Activated B cell treated with CpG ODN at 0.5 μM for 24 hours (primary cell): ENCODE measurements at regions of chr15 and their contacts with region 1.

Region 1: DNA sequence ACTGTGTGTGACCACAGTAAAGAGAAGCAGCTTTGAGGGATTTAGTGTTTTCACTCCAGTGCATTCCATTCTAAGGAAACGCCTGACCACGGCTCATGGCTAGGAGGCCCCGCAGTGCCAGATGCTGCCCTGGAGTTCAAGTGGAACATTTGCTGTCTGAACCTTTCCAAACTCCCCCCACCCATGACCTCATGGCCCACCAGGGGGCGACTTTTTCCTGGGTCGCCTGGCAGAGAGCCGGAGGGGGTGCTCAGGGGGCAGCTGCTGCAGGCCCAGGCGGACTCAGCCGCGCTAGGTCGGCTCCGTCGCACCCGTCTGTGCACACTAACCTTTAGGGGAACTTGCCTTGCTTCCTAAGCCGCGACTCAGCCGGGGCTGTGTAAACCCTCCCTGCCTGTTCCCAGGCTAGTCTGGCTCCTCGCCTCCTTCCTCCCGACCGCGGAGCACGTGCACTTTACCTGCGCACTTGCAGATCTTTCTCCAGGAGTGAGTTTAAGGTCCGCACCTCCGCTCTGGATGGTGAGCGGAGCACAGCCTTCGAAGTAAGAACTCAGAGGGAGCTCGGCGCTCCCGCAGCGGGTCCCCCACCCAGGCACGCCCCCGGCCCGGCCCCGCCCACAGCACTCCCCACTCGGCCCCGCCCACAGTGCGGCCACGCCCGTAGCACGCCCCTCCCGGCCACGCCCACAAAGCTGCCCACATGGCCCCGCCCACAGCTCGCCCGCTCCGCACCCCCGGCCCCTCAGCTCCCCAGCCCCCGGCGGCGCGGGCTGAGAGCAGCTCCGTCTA is at the start of gene OCA2:
- DNase-seq: peak; percentile 47
- ATAC-seq: no peak
- H3K4me3 Mint-ChIP-seq: peak within 1 kb of the TSS; percentile 53
- H3K27ac Mint-ChIP-seq: no peak within 1 kb of the TSS
- H3K4me1 Mint-ChIP-seq: peaks cover 37% of the 10 kb centered on the region
- H3K27me3 Mint-ChIP-seq: peaks cover 52% of the 10 kb centered on the region
- CTCF ChIP-seq: no peak
- total RNA-seq, gene OCA2: not detected in 2 replicates

Region 2: GRCh38 chr15:28086175-28086703 is 12.7 kb before region 1 on chr15:
- CTCF ChIA-PET with region 1: interaction called, 5 read pairs
- POLR2A ChIA-PET with region 1: no interaction called
- intact Hi-C with region 1: loop called (anchors 1 kb)
- DNase-seq: no peak
- ATAC-seq: peak; percentile 100
- H3K4me3 Mint-ChIP-seq: no peak overlapping the region
- H3K27ac Mint-ChIP-seq: no peak overlapping the region
- H3K4me1 Mint-ChIP-seq: peaks cover 12% of the 10 kb centered on the region
- H3K27me3 Mint-ChIP-seq: peaks cover 38% of the 10 kb centered on the region
- CTCF ChIP-seq: no peak